Ascending aorta (tissue), 2 donors: ENCODE measurements at regions of chr4 and their contacts with region 1.

Region 1: DNA sequence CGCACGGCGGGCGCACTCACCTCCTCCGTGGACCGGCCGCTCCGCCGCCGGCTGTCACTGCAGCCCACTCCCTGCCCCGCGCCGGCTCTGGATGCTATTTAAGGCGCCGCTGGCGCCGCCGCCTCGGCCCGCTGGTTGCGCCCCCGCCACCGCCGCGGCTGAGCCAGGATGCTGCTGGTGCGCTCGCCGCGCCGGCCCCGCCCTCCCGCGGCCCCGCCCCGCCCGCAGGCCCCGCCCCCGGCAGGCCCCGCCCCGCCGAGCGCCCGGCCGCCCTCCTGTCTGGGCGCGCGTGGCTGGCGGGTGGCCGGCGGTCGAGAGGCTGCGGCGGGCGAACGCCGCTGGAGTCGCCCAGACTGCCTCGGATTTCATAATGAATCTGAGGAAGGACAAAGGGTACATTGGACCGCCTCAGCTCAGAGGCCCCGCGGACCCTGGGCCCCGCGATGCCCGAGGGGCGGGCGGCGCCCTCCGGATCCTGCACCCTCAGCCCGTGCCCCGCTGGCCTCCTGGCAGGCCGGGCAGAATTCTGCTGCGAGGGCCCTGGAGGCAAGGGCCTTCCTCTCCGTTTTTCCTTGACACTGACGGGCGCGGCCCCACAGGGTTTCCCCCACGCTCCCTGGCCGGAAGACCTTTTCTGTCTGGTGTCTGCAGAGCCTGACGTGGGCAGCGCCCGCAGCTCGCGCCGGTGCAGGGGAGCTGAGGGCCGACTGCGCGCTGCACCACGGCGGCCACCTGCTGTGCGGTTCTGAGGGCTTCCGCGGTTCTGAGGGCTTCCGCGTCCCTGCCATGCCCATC is at the start of gene ACSL1:
- DNase-seq: peak; percentile 66 to 93
- H3K4me3 ChIP-seq: peak within 1 kb of the TSS; percentile 80 to 90
- H3K27ac ChIP-seq: peak within 1 kb of the TSS; percentile 76 to 85
- H3K4me1 ChIP-seq: peaks cover 0 to 10% of the 10 kb centered on the region in 2 donors
- H3K27me3 ChIP-seq: no peaks in the 10 kb centered on the region
- CTCF ChIP-seq: peak in 1 of 3 experiments; percentile 26
- total RNA-seq, gene ACSL1: 31.8 TPM

Region 2: GRCh38 chr4:184474263-184475095 is 351.6 kb before region 1 on chr4 and contains the start of gene IRF2:
- intact Hi-C with region 1: loop called (anchors 10 kb)
- DNase-seq: peak; percentile 87 to 98
- H3K4me3 ChIP-seq: peak within 1 kb of the TSS; percentile 89 to 95
- H3K27ac ChIP-seq: peak within 1 kb of the TSS; percentile 96 to 98
- H3K4me1 ChIP-seq: peaks cover 0 to 18% of the 10 kb centered on the region in 2 donors
- H3K27me3 ChIP-seq: no peaks in the 10 kb centered on the region
- CTCF ChIP-seq: peak in 2 of 3 experiments; percentile 7 to 15
- total RNA-seq, gene IRF2: 39.6 TPM

Region 3: DNA sequence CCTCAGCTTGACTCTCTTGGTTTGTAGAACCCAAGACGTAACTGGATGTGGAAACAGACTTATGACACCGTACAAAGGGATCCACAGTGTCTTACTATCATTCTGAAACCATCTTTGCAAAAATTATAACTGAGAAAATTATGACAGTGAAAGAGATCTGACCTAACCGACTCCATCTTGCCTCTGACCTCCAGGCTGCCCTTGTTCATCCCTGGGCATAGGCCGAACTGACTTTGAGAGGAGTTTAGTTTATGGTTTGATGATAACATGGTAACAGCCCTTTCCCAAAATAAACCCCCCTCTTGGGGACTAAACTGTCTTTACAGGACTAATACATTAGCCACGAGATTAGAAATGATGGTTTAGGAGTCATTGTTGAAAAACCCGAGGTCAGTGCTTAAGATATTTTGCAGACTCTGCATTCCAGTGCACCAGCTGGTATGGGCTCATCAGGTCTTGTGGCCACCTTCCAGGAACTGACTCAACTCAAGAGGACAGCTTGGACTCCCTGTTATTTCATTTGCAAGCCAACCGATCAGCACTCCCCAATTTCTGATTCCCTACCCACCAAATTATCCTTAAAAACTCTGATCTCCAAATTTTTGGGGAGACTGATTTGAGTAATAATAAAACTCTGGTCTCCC is 226.5 kb before region 1 on chr4:
- intact Hi-C with region 1: no loop called
- DNase-seq: no peak
- H3K4me3 ChIP-seq: no peak overlapping the region
- H3K27ac ChIP-seq: no peak overlapping the region
- H3K4me1 ChIP-seq: no peaks in the 10 kb centered on the region
- H3K27me3 ChIP-seq: no peaks in the 10 kb centered on the region
- CTCF ChIP-seq: no peak

Region 4: DNA sequence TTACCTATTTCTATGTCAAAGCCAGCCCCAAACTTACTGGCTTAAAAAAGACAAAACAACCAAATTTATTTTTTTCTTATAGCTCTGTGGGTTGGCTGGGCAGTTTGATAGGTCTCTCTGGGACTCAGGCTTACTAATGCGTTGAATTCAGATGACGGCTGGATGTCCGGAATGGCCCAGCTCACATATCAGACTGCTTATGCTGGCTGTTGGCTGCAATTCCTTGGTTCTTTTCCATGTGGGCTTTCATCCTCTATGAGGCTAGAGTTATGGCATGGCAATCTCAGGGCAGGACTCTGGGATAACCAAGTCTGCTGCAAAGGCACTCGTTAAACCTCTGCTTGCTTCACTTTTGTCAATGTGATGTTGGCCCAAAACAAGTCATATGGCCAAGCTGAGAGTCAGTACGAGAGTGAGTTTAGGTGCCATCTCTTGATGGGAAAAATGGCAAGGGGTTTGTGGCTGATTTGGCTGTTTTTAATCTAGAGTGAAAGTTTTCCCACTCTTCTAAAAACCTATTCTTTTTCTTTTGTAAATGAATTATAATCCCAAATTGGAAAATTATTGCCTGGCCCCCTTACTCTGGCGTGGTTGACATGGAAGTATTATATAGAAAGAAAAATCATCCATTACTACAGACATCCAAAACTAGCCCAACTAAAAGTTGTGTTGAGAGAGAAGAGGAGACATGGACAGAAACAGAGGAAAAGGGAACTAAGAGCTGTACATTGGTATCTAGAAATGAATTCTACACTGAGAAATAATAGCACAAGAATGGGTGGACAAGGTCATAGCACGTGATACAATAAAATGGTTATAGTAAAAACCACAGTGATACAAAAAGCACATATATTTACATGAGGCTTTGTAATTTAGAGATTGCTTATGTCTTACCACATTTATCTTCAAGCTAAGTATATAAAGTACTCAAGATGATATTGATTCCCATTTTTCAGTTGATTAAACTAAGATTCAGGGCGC is 169.9 kb before region 1 on chr4:
- intact Hi-C with region 1: no loop called
- DNase-seq: no peak
- H3K4me3 ChIP-seq: no peak overlapping the region
- H3K27ac ChIP-seq: peak overlapping the region; percentile 21 to 58
- H3K4me1 ChIP-seq: no peaks in the 10 kb centered on the region
- H3K27me3 ChIP-seq: no peaks in the 10 kb centered on the region
- CTCF ChIP-seq: no peak

Region 5: DNA sequence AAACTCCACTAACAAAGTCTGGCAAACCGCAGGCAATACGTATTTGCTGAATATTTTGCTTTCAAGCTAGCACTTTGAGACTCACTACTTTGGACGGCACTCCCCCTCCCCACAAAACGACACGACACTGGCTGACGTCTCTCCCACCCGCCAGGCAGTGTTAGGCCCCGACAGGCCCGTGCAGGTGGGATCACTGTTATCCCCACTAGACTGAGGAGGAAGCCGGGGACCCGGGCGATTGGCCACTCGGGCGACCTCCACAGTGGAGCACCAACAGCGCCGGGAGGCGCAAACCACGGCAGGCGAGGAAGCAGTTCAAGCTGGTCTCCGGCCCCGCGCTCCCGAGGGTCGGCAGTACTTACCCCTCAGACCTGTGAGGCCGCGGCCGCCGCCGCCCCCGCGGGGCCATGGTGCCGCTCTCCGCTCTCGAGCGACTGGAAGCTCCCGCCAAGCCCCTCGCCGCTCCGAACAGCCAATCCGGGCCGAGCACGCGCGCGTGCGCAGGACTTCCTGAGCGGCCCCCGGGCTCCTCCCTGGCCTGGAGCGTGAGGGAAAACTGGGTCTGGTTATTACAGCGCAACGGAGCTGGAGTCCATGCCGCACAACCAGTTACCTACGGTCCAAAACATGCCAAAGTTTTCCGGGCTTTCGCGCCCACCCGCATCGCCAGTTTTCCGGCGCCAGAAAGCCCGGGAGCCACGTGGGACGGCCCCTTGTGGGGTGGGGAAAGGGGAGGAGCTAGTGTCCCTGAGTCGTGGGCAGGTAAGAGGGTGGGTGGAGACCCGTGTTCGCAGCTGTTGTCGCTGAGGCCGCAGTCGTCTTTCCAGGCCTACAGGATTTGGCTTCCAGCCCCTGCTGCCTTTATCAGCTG is 92.2 kb before region 1 on chr4 and contains the start of gene CENPU:
- intact Hi-C with region 1: loop called (anchors 5 kb)
- DNase-seq: peak; percentile 87 to 98
- H3K4me3 ChIP-seq: peak within 1 kb of the TSS; percentile 68 to 91
- H3K27ac ChIP-seq: peak within 1 kb of the TSS in 1 of 2 donors; percentile 58
- H3K4me1 ChIP-seq: peaks cover 0 to 8% of the 10 kb centered on the region in 2 donors
- H3K27me3 ChIP-seq: no peaks in the 10 kb centered on the region
- CTCF ChIP-seq: no peak
- total RNA-seq, gene CENPU: not detected

Region 6: GRCh38 chr4:185142912-185143595 is 317.0 kb after region 1 on chr4 and contains the start of gene SLC25A4:
- intact Hi-C with region 1: loop called (anchors 5 kb)
- DNase-seq: peak; percentile 50 to 94
- H3K4me3 ChIP-seq: peak within 1 kb of the TSS; percentile 65 to 87
- H3K27ac ChIP-seq: peak within 1 kb of the TSS; percentile 92 to 93
- H3K4me1 ChIP-seq: peaks cover 3 to 15% of the 10 kb centered on the region in 2 donors
- H3K27me3 ChIP-seq: no peaks in the 10 kb centered on the region
- CTCF ChIP-seq: peak; percentile 44 to 69 (median 58)
- total RNA-seq, gene SLC25A4: 19.6 TPM

Region 7: DNA sequence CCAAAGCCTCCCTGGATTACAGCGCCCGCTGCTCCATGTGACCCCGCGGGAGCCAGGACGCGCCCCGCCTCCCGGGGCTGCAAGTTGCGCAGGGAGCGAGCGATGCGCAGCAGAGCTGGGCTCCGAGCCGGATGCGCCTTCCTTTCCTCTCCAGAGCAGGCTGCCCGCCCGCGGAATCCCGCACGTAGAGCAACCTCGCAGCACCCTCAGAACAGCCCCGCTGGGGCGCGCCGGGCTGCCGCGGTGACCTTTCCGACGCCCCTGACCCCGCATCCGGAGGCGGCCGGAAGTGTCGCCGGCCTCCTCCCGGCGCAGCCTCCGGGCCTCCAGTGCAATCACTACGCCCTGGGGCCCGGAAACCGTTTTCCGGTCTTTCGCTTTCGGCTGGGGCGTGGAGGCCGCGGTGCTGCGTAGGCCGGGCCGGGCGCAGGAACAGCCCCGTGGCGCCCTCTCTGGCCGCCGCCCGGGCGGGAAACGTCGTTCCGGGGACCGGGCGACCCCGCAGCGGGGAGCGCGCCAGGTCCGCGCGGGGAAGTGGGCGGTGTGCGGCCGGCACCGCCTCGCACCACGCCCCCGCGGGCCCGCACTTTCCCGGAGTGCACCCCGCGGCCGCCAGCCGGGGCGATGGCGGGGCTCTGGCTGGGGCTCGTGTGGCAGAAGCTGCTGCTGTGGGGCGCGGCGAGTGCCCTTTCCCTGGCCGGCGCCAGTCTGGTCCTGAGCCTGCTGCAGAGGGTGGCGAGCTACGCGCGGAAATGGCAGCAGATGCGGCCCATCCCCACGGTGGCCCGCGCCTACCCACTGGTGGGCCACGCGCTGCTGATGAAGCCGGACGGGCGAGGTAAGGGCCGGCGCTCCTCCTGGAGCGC is 1365.3 kb after region 1 on chr4 and contains the start of gene CYP4V2:
- intact Hi-C with region 1: loop called (anchors 2 kb)
- DNase-seq: peak in 1 of 2 donors; percentile 90
- H3K4me3 ChIP-seq: peak within 1 kb of the TSS; percentile 92 to 97
- H3K27ac ChIP-seq: peak within 1 kb of the TSS; percentile 95 to 97
- H3K4me1 ChIP-seq: peaks cover 0 to 15% of the 10 kb centered on the region in 2 donors
- H3K27me3 ChIP-seq: no peaks in the 10 kb centered on the region
- CTCF ChIP-seq: peak in 2 of 3 experiments; percentile 18 to 21
- total RNA-seq, gene CYP4V2: 14.3 TPM